Psoas muscle (tissue), 8 donors: ENCODE measurements at regions of chr4 and their contacts with region 1.

Region 1: GRCh38 chr4:88514557-88515511 is 8.7 kb downstream of the PYURF start:
- DNase-seq: no peak
- ATAC-seq: no peak
- H3K4me3 ChIP-seq: no peak overlapping the region
- H3K27ac ChIP-seq: no peak overlapping the region
- H3K4me1 ChIP-seq: no peaks in the 10 kb centered on the region
- H3K27me3 ChIP-seq: peaks cover 0 to 2% (median 0%) of the 10 kb centered on the region in 3 donors
- CTCF ChIP-seq: no peak

Region 2: DNA sequence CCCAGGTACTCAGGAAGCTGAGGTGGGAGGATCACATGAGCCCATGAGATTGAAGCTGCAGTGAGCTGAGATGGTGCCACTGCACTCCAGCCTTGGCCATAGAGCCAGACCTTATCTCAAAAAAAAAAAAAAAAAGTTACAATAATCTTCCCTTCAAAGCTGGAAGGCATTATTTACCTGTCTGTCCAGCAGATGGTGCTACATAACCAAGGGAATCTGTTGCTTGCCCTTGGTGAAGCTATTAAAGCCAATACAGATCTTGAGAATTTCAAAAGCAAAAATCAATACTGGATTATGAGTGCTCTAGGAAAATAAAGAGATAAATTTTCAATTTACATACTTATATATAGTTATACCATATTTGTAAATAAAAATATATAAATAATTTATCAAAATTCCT is 481.5 kb before region 1 on chr4:
- intact Hi-C with region 1: loop called (anchors 5 to 10 kb)
- DNase-seq: no peak
- ATAC-seq: peak; percentile 43 to 69 (median 54)
- H3K4me3 ChIP-seq: no peak overlapping the region
- H3K27ac ChIP-seq: no peak overlapping the region
- H3K4me1 ChIP-seq: peaks cover 2% of the 10 kb centered on the region
- H3K27me3 ChIP-seq: no peaks in the 10 kb centered on the region
- CTCF ChIP-seq: peak; percentile 70

Region 3: GRCh38 chr4:88217920-88218319 is 296.9 kb before region 1 on chr4:
- intact Hi-C with region 1: loop called (anchors 2 kb)
- DNase-seq: no peak
- ATAC-seq: no peak
- H3K4me3 ChIP-seq: no peak overlapping the region
- H3K27ac ChIP-seq: no peak overlapping the region
- H3K4me1 ChIP-seq: peaks cover 2% of the 10 kb centered on the region
- H3K27me3 ChIP-seq: no peaks in the 10 kb centered on the region
- CTCF ChIP-seq: no peak

Region 4: DNA sequence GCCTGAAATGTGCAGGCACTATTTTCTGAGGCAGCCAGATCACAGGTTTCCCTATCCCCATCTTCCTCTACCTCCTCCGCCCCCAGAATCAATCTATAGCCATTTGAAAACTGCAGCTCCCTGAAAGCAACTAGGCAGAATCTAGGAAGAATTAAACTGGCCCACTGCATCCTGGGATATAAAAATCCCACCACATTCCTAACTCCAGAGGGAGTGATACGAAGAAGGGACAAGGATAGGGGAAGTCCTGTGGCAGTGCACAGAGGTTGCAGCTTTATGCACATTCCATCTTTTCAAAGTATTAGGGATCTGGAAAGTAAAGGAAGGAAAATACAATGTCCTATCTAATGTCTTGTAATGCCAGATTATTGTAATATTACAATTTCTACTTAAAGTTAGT is 59.2 kb after region 1 on chr4:
- intact Hi-C with region 1: no loop called
- DNase-seq: no peak
- ATAC-seq: peak in 2 of 4 donors; percentile 55 to 61
- H3K4me3 ChIP-seq: no peak overlapping the region
- H3K27ac ChIP-seq: no peak overlapping the region
- H3K4me1 ChIP-seq: peaks cover 12% of the 10 kb centered on the region
- H3K27me3 ChIP-seq: no peaks in the 10 kb centered on the region
- CTCF ChIP-seq: no peak